GM12878 (cell line): ENCODE measurements at regions of chr1 and their contacts with region 1.

Region 1: GRCh38 chr1:185595835-185596667 is 138.1 kb upstream of the HMCN1 start:
- DNase-seq: peak; percentile 13
- ATAC-seq: peak; percentile 98
- H3K4me3 ChIP-seq: no peak overlapping the region
- H3K27ac ChIP-seq: no peak overlapping the region
- H3K4me1 ChIP-seq: no peaks in the 10 kb centered on the region
- H3K27me3 ChIP-seq: no peaks in the 10 kb centered on the region
- CTCF ChIP-seq: peak; percentile 71 to 86 (median 83)
- EP300 ChIP-seq: no peak
- POLR2A ChIP-seq: no peak
- RAD21 ChIP-seq: peak; percentile 72

Region 2: DNA sequence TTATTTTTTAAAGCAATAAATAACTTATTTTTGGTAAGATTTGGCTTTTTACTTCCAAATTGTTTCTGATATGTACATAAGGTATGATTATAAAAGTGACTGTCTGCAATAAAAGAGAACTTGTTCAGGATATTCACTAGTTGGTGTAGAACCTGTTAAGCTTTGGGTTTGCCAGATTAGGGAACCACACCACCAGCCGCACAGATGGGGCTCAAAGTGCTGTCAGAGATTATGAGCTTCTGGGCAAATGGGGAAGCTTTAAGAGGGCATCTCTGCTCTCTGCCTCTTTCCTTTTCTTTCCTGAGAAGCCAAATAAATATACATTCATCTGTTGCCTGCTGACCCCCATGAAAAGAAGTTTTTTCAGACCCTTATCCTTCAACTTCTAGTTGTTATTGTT is 304.4 kb before region 1 on chr1:
- CTCF ChIA-PET with region 1: interaction called, 13 read pairs
- POLR2A ChIA-PET with region 1: no interaction called
- RAD21 ChIA-PET with region 1: interaction called, 4 read pairs
- SMC1A ChIA-PET with region 1: interaction called, 6 read pairs
- in situ Hi-C with region 1: no loop called
- intact Hi-C with region 1: no loop called
- DNase-seq: no peak
- ATAC-seq: peak; percentile 25
- H3K4me3 ChIP-seq: no peak overlapping the region
- H3K27ac ChIP-seq: no peak overlapping the region
- H3K4me1 ChIP-seq: no peaks in the 10 kb centered on the region
- H3K27me3 ChIP-seq: no peaks in the 10 kb centered on the region
- CTCF ChIP-seq: no peak
- EP300 ChIP-seq: no peak
- POLR2A ChIP-seq: no peak
- RAD21 ChIP-seq: no peak

Region 3: GRCh38 chr1:185559684-185560331 is 36.2 kb before region 1 on chr1:
- CTCF ChIA-PET with region 1: interaction called, 25 read pairs
- POLR2A ChIA-PET with region 1: no interaction called
- RAD21 ChIA-PET with region 1: interaction called, 3 read pairs
- SMC1A ChIA-PET with region 1: interaction called, 17 read pairs
- in situ Hi-C with region 1: no loop called
- intact Hi-C with region 1: no loop called
- DNase-seq: peak; percentile 72
- ATAC-seq: peak; percentile 96
- H3K4me3 ChIP-seq: no peak overlapping the region
- H3K27ac ChIP-seq: no peak overlapping the region
- H3K4me1 ChIP-seq: peaks cover 7% of the 10 kb centered on the region
- H3K27me3 ChIP-seq: no peaks in the 10 kb centered on the region
- CTCF ChIP-seq: peak; percentile 34 to 51 (median 46)
- EP300 ChIP-seq: peak in 1 of 2 experiments; percentile 66; a peak in 2 of 4 replicates
- POLR2A ChIP-seq: no peak
- RAD21 ChIP-seq: peak; percentile 59

Region 4: DNA sequence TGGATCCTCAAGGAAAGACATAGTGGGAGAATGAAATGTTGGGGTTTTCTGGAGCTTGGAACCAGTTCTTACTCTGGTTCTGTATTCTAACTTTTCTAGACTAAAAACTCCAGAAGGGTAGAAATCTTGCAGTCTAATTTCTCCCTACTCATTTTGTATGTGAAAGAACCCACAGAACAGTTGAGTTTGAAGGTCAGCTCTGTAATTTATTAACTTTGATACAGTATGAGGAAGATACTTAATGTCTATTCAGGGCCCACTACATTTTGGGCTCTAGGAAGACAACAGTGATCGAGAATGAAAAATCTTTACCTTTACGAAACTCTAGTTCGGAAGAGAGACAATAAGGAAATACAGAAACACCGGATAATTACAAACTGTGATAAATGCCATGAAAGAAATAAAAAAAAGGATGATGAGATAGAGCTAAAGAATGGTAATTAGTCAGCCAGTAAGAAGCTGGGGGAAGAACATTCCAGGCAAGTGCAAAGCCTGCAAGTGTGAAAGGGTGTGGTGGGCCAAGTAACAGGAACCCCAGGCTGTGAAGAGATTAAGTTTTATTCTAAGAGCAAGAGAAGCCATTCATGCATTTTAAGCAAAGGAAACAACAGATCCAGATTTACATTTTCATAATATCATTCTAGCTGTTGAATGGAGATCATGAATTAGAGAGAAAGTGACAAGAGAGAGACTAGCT is 21.8 kb before region 1 on chr1:
- CTCF ChIA-PET with region 1: interaction called, 21 read pairs
- POLR2A ChIA-PET with region 1: no interaction called
- RAD21 ChIA-PET with region 1: no interaction called
- SMC1A ChIA-PET with region 1: interaction called, 9 read pairs
- in situ Hi-C with region 1: no loop called
- intact Hi-C with region 1: no loop called
- DNase-seq: no peak
- ATAC-seq: no peak
- H3K4me3 ChIP-seq: no peak overlapping the region
- H3K27ac ChIP-seq: no peak overlapping the region
- H3K4me1 ChIP-seq: no peaks in the 10 kb centered on the region
- H3K27me3 ChIP-seq: no peaks in the 10 kb centered on the region
- CTCF ChIP-seq: no peak
- EP300 ChIP-seq: no peak
- POLR2A ChIP-seq: no peak
- RAD21 ChIP-seq: no peak

Region 5: GRCh38 chr1:185608177-185608576 is 12.1 kb after region 1 on chr1:
- CTCF ChIA-PET with region 1: interaction called, 14 read pairs
- POLR2A ChIA-PET with region 1: no interaction called
- RAD21 ChIA-PET with region 1: no interaction called
- SMC1A ChIA-PET with region 1: no interaction called
- in situ Hi-C with region 1: no loop called
- intact Hi-C with region 1: no loop called
- DNase-seq: peak; percentile 19
- ATAC-seq: peak; percentile 47
- H3K4me3 ChIP-seq: no peak overlapping the region
- H3K27ac ChIP-seq: no peak overlapping the region
- H3K4me1 ChIP-seq: no peaks in the 10 kb centered on the region
- H3K27me3 ChIP-seq: no peaks in the 10 kb centered on the region
- CTCF ChIP-seq: no peak
- EP300 ChIP-seq: no peak
- POLR2A ChIP-seq: no peak
- RAD21 ChIP-seq: no peak

Region 6: GRCh38 chr1:185701650-185702049 is 105.6 kb after region 1 on chr1:
- CTCF ChIA-PET with region 1: no interaction called
- POLR2A ChIA-PET with region 1: no interaction called
- RAD21 ChIA-PET with region 1: no interaction called
- SMC1A ChIA-PET with region 1: no interaction called
- in situ Hi-C with region 1: no loop called
- intact Hi-C with region 1: no loop called
- DNase-seq: no peak
- ATAC-seq: no peak
- H3K4me3 ChIP-seq: no peak overlapping the region
- H3K27ac ChIP-seq: no peak overlapping the region
- H3K4me1 ChIP-seq: no peaks in the 10 kb centered on the region
- H3K27me3 ChIP-seq: no peaks in the 10 kb centered on the region
- CTCF ChIP-seq: no peak
- EP300 ChIP-seq: no peak
- POLR2A ChIP-seq: no peak
- RAD21 ChIP-seq: no peak